Activated CD8-positive, alpha-beta T cell treated with anti-CD3 and anti-CD28 coated beads for 36 hours (primary cell): ENCODE measurements at regions of chr17 and their contacts with region 1.

Region 1: DNA sequence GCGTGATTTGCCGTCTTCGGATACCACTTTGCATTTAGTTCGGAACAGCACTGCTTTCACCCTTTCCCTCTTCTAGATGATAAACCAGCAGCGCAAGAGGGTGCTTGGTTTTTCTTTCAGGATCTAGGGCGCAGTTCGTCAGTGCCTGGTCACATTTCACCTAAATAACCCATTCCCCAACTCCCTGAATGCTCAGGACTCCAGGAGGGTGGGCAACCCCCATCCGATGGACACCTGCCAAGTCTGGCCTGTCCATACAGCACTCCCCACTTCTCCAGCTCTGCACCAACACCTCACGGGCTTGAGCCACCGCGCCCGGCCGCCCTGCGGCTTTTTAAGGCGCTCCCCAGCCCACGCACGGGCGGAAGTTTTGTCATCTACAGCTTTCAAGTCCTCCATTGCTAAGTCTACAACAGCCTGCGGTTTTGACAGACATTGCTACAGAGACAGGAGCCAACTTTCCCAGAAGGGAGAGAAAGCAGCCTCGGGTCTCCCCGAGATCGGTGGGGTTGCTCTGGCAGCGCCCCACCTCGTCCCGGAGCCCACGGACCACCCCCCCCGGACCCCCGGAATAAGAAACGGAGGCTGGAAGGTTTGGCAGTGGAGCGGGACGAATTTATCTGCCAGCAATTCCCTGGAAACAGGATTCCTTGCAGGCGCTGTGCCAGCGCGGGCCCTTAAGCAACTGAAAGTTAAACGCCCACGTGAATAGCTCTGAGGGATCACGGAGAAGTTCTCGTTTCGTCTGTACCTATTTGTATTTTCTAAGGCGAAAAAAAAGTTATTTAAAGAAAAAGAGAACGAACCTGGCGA is 38.6 kb upstream of the SLFN13 start:
- DNase-seq: peak; percentile 94
- ATAC-seq: peak; percentile 65
- H3K4me3 Mint-ChIP-seq: peak overlapping the region; percentile 78
- H3K27ac Mint-ChIP-seq: peak overlapping the region; percentile 93
- H3K4me1 Mint-ChIP-seq: peaks cover 50% of the 10 kb centered on the region
- H3K27me3 Mint-ChIP-seq: no peaks in the 10 kb centered on the region
- CTCF ChIP-seq: no peak

Region 2: GRCh38 chr17:35373534-35373983 is 113.6 kb before region 1 on chr17 and contains the start of gene SLFN11:
- CTCF ChIA-PET with region 1: no interaction called
- POLR2A ChIA-PET with region 1: interaction called, 24 read pairs
- intact Hi-C with region 1: loop called (anchors 5 kb)
- DNase-seq: peak; percentile 95
- ATAC-seq: peak; percentile 71
- H3K4me3 Mint-ChIP-seq: peak within 1 kb of the TSS; percentile 91
- H3K27ac Mint-ChIP-seq: peak within 1 kb of the TSS; percentile 99
- H3K4me1 Mint-ChIP-seq: peaks cover 52% of the 10 kb centered on the region
- H3K27me3 Mint-ChIP-seq: no peaks in the 10 kb centered on the region
- CTCF ChIP-seq: no peak
- total RNA-seq, gene SLFN11: 95.8 to 106 TPM

Region 3: GRCh38 chr17:35448214-35448898 is 38.8 kb before region 1 on chr17 and contains the start of gene SLFN13:
- CTCF ChIA-PET with region 1: no interaction called
- POLR2A ChIA-PET with region 1: interaction called, 20 read pairs
- intact Hi-C with region 1: no loop called
- DNase-seq: peak; percentile 99
- ATAC-seq: peak; percentile 96
- H3K4me3 Mint-ChIP-seq: peak within 1 kb of the TSS; percentile 65
- H3K27ac Mint-ChIP-seq: peak within 1 kb of the TSS; percentile 73
- H3K4me1 Mint-ChIP-seq: peaks cover 24% of the 10 kb centered on the region
- H3K27me3 Mint-ChIP-seq: no peaks in the 10 kb centered on the region
- CTCF ChIP-seq: no peak
- total RNA-seq, gene SLFN13: 39.9 to 41.8 TPM

Region 4: DNA sequence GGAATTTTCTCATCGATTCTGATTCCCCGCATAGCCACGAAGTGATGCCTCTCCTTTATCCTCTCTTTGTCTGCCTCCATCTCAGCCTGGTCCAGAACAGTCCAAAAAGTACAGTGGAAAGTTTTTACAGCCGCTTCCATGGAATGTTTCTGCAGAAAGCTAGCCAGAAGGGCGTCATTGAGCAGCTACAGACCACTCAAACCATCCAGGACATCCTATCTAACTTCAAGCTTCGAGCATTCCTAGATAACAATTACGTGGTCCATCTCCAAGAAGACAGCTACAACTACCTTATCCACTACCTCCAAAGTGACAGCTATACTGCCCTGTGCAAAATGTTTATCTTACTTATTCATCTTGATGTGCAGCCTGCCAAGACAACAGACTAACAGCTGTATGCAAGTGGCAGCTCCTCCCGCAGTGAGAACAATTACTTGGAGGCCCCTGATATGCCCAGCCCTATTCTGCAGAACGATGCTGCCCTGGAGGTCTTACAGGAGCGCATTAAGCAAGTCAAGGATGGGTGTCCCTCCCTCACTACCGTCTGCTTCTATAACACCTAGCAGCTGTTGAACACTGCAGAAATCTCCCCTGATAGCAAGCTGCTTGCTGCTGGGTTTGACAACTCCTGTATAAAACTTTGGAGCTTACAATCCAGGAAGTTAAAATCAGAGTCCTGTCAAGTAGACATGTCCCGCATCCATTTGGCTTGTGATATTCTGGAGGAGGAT is 11.5 kb after region 1 on chr17:
- CTCF ChIA-PET with region 1: interaction called, 5 read pairs
- POLR2A ChIA-PET with region 1: interaction called, 18 read pairs
- intact Hi-C with region 1: no loop called
- DNase-seq: no peak
- ATAC-seq: no peak
- H3K4me3 Mint-ChIP-seq: no peak overlapping the region
- H3K27ac Mint-ChIP-seq: no peak overlapping the region
- H3K4me1 Mint-ChIP-seq: peaks cover 68% of the 10 kb centered on the region
- H3K27me3 Mint-ChIP-seq: no peaks in the 10 kb centered on the region
- CTCF ChIP-seq: no peak

Region 5: GRCh38 chr17:35529866-35530265 is 42.7 kb after region 1 on chr17:
- CTCF ChIA-PET with region 1: interaction called, 6 read pairs
- POLR2A ChIA-PET with region 1: interaction called, 7 read pairs
- intact Hi-C with region 1: loop called (anchors 5 kb)
- DNase-seq: peak; percentile 17
- ATAC-seq: peak; percentile 42
- H3K4me3 Mint-ChIP-seq: peak overlapping the region; percentile 67
- H3K27ac Mint-ChIP-seq: peak overlapping the region; percentile 83
- H3K4me1 Mint-ChIP-seq: peaks cover 69% of the 10 kb centered on the region
- H3K27me3 Mint-ChIP-seq: no peaks in the 10 kb centered on the region
- CTCF ChIP-seq: no peak